OCI-LY7 (cell line): ENCODE measurements at regions of chr1 and their contacts with region 1.

Region 1: DNA sequence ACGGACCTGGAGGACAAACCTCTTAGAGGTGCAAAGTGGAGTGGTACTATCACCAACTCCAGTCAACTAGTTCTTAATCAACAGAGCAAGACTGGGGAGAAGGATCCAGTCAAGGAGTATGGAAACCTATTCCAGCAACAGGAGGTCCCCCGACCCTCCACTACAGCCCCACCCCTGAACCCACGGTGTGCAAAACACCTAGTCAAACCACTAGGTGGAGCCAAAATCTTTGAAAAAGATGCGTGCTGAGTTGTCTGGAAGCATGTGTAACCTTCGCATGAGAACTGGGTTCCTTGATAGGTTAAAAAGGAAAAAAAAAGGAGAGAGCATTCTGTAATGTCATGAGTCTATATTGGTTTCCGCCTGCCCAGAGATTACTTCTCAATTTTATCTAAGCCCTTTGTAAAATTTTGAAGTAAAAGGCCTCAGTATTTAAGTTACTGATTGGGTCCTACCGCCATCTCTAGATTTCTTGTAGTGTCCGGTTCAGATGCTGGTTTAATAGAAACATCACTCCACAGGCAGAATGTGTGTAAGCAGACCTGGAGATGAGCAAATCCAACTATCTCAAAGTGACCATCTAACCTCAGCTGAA is 81.9 kb upstream of the HAO2 start:
- DNase-seq: peak; percentile 50
- H3K4me3 ChIP-seq: no peak overlapping the region
- H3K27ac ChIP-seq: no peak overlapping the region
- H3K4me1 ChIP-seq: no peaks in the 10 kb centered on the region
- CTCF ChIP-seq: peak; percentile 84

Region 2: DNA sequence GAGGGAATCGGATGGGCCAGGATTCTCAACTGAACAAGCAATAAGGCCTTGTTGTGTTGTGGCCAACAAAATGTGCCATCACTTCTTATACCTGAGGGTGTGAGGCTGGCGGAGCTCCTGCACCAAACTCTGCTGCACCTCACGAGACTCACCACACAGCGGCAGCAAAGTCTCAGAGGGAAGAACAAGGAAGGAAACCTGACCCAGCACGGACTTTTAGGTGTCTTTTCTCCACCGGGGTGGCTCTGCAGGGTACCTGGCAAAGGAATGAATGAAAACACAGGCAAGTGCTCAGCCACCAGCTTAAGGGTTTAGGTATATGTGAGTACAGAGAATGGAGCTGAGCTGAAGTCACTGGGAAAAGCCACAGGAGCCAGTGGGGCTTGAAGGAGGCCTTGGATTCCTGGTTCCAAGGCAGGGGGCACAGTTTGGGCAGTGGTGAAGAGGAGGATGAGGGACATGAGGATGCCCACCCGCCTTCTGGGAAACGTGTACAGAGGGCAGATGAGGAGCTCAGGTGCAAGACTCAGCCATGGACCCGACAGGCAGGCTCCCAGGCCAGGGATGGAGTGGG is 189.3 kb after region 1 on chr1:
- CTCF ChIA-PET with region 1: no interaction called
- POLR2A ChIA-PET with region 1: no interaction called
- intact Hi-C with region 1: loop called (anchors 10 kb)
- DNase-seq: peak; percentile 48
- H3K4me3 ChIP-seq: no peak overlapping the region
- H3K27ac ChIP-seq: no peak overlapping the region
- H3K4me1 ChIP-seq: no peaks in the 10 kb centered on the region
- CTCF ChIP-seq: peak; percentile 78

Region 3: DNA sequence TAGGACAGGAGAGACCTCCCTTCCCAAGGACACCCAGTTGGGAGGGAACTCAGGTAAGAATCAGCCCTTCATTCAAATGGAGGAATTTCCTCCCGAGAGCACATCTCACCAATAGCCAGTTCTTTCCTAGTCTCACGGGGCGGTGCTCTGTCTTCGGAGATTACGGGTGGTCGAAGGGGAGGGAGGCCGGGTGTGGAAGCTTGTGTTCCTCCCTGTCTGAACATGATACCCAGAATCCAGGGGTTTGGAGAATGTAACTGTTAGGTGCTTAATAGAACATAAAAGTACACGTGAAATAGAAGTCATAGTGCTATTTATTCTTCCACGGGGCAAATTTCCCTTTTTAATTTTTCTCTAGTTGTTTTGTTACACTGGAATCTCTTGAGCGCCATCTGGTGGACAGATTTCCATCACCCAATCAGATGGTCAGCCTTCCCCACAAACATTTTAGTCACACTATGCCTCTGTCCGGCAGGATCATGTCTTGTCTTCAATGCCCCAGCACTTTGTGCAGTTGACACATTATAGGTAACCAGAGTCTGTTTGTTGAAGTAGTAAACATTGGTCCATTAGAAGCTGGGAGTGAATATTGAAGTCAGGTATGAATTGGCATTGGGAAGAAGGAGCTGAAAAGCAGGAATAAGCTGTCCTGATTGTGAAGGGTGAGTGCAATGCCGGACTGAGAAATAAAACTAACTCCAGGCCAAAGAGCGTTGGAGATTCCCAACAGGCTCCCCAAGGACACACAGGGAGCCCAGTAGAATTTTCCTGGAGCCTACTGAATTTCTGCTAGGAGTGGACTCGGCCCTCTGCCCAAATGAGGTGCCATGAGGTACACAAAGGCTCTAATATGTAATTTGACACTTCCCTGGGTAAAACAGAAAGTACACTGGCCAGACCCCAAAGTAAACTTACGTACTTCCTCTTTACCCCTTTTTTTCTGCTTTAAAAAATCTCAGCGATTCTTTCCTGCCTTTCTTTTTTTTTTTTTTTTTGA is 389.0 kb after region 1 on chr1:
- CTCF ChIA-PET with region 1: no interaction called
- POLR2A ChIA-PET with region 1: no interaction called
- intact Hi-C with region 1: loop called (anchors 5 kb)
- DNase-seq: peak; percentile 75
- H3K4me3 ChIP-seq: no peak overlapping the region
- H3K27ac ChIP-seq: no peak overlapping the region
- H3K4me1 ChIP-seq: no peaks in the 10 kb centered on the region
- CTCF ChIP-seq: peak; percentile 96